Panc1 (cell line): ENCODE measurements at regions of chr6 and their contacts with region 1.

Region 1: DNA sequence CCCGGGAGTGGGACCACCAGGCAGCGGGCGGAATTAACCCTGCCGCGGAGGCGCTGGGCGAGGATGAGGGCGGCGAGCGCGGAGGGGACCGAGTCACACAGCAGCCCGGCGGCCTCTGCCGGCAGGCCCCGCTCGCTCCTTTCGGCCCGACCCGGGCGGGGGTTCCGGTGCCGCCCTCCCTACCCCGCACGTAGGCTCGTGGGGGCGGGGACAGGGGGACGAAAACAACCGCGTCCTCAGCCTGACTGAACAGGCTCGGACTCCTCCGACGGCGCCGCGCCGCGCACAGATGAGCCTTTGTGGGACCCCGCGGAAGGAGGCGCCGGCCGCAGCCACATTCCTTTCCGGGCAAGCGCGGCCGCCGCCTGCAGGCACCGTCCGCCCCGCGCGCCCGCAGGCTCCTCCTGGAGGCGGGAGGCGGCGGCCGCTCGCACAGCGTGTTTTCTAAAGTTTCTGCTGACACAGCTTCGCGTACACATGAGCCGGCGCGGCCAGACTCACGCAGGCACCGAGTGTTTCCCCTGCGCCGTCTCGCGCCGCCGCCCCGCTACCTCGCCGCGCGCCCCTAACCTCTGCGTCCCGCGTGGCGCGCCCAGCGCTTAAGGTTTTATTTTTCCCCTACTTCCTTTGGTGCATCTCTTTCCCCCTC is 244.3 kb downstream of the ARID1B start:
- DNase-seq: no peak
- ATAC-seq: peak; percentile 94
- H3K4me3 ChIP-seq: peak overlapping the region; percentile 78 to 84
- H3K27ac ChIP-seq: peak overlapping the region; percentile 90
- H3K4me1 ChIP-seq: peaks cover 42% of the 10 kb centered on the region
- H3K27me3 ChIP-seq: no peaks in the 10 kb centered on the region
- CTCF ChIP-seq: peak; percentile 70

Region 2: GRCh38 chr6:156009656-156010055 is 1011.8 kb before region 1 on chr6:
- CTCF ChIA-PET with region 1: no interaction called
- POLR2A ChIA-PET with region 1: no interaction called
- in situ Hi-C with region 1: no loop called
- intact Hi-C with region 1: no loop called
- DNase-seq: no peak
- ATAC-seq: no peak
- H3K4me3 ChIP-seq: no peak overlapping the region
- H3K27ac ChIP-seq: no peak overlapping the region
- H3K4me1 ChIP-seq: no peaks in the 10 kb centered on the region
- H3K27me3 ChIP-seq: no peaks in the 10 kb centered on the region
- CTCF ChIP-seq: no peak

Region 3: DNA sequence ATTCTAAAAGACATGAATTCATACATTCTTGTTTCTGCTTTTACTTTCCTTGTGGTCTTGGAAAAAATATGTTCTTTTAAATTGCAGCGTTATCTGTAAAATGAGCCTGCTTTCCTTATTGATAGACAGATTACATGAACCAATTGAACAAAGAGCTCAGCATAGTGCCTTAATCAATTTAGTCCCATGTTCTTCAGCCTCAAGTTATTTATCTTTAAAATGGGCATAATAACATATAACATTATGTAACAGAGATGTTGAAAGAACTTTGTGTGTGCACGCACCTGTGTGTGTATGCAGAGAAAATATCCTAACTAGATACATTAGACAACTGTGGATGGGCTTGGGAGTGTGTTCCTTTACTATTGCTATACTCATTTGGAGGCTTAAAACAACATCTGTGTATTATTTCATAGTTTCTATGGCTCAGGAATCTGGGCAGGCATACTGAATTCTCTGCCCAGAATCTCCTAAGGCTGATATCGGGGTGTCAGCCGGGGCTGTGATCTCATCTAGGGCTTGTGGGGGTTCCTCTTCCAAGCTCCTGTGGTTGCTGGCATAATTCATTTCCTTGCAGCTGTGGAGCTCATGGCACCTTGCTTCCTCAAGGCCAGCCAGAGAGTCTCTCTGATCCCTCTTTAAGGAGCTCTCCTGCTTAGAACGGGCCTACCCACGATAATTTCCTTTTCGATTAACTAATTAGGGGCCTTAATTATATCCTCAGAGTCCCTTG is 50.1 kb before region 1 on chr6:
- CTCF ChIA-PET with region 1: no interaction called
- POLR2A ChIA-PET with region 1: no interaction called
- in situ Hi-C with region 1: no loop called
- intact Hi-C with region 1: loop called (anchors 5 kb)
- DNase-seq: no peak
- ATAC-seq: no peak
- H3K4me3 ChIP-seq: no peak overlapping the region
- H3K27ac ChIP-seq: no peak overlapping the region
- H3K4me1 ChIP-seq: 0 out of 2 replicates have a peak, but pooled peaks cover 8% of the 10 kb centered on the region
- H3K27me3 ChIP-seq: no peaks in the 10 kb centered on the region
- CTCF ChIP-seq: no peak